ENCODE measurements at regions of chr1 and their contacts with region 1.

Region 1: GRCh38 chr1:38859561-38860453 is at the start of gene RRAGC:
- DNase-seq: peak; percentile 98
- ATAC-seq: peak; percentile 92
- H3K4me3 ChIP-seq: peak within 1 kb of the TSS; percentile 68 to 92 (median 85)
- H3K4me3 Mint-ChIP-seq: peak within 1 kb of the TSS; percentile 93
- H3K27ac ChIP-seq: peak within 1 kb of the TSS; percentile 82 to 91
- H3K27ac Mint-ChIP-seq: peak within 1 kb of the TSS; percentile 96
- H3K4me1 ChIP-seq: peaks cover 22 to 31% of the 10 kb centered on the region in 2 donors
- H3K4me1 Mint-ChIP-seq: peaks cover 53% of the 10 kb centered on the region
- H3K27me3 ChIP-seq: no peaks in the 10 kb centered on the region
- H3K27me3 Mint-ChIP-seq: no peaks in the 10 kb centered on the region
- CTCF ChIP-seq: no peak
- total RNA-seq, gene RRAGC: 37.6 and 39.3 TPM in 2 replicates

Region 2: GRCh38 chr1:37479255-37480124 is 1380.3 kb before region 1 on chr1:
- CTCF ChIA-PET with region 1: no interaction called
- POLR2A ChIA-PET with region 1: no interaction called
- intact Hi-C with region 1: loop called (anchors 5 kb)
- DNase-seq: peak; percentile 79
- ATAC-seq: peak; percentile 50
- H3K4me3 ChIP-seq: peak overlapping the region; percentile 94 to 99 (median 98)
- H3K4me3 Mint-ChIP-seq: peak overlapping the region; percentile 100
- H3K27ac ChIP-seq: peak overlapping the region; percentile 96 to 97
- H3K27ac Mint-ChIP-seq: peak overlapping the region; percentile 98
- H3K4me1 ChIP-seq: peaks cover 32 to 66% of the 10 kb centered on the region in 2 donors
- H3K4me1 Mint-ChIP-seq: peaks cover 60% of the 10 kb centered on the region
- H3K27me3 ChIP-seq: no peaks in the 10 kb centered on the region
- H3K27me3 Mint-ChIP-seq: no peaks in the 10 kb centered on the region
- CTCF ChIP-seq: no peak

Region 3: DNA sequence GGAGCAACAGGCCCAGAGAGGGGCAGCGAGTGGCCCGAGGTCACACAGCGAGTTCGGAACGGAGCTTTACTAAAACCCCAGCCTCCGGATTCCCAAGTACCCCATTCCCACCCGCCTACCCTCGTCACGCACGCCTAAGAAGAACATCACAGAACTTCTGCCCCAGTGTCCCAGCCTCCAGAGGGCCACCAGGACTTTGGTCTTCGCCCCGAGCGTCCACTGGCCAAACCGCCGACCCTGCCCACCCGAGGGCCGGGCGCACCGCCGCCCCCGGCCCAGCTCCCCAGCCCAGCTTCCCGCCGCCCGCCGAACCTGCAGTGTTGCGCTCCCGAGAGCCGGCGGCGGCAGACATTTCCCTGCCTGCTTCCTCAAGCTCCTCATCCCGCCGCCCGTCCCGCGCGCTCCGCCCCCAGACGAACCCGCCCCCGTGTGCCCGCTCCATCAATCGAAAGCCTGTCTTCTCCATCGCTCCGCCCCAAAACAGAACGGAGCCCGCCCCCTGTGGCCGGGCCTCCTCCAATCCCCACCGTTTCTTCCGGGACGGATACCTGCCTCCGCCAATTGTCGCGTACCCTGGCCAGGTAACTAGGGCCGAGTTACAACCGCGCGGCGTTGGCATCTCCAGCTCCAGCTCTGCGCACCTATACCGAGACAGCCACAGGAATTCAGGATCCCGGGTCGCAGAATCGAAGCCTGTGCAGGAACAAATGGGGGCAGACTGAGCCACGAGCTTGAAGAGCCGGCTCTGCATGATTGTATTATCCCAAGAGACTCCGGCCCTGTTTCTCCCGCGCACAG is 928.2 kb before region 1 on chr1:
- CTCF ChIA-PET with region 1: no interaction called
- POLR2A ChIA-PET with region 1: no interaction called
- intact Hi-C with region 1: loop called (anchors 2 kb)
- DNase-seq: peak; percentile 97
- ATAC-seq: peak; percentile 99
- H3K4me3 ChIP-seq: peak overlapping the region; percentile 69 to 98 (median 97)
- H3K4me3 Mint-ChIP-seq: peak overlapping the region; percentile 89
- H3K27ac ChIP-seq: peak overlapping the region in 1 of 2 donors; percentile 80
- H3K27ac Mint-ChIP-seq: peak overlapping the region; percentile 83
- H3K4me1 ChIP-seq: peaks cover 18 to 28% of the 10 kb centered on the region in 2 donors
- H3K4me1 Mint-ChIP-seq: peaks cover 42% of the 10 kb centered on the region
- H3K27me3 ChIP-seq: no peaks in the 10 kb centered on the region
- H3K27me3 Mint-ChIP-seq: no peaks in the 10 kb centered on the region
- CTCF ChIP-seq: no peak

Region 4: DNA sequence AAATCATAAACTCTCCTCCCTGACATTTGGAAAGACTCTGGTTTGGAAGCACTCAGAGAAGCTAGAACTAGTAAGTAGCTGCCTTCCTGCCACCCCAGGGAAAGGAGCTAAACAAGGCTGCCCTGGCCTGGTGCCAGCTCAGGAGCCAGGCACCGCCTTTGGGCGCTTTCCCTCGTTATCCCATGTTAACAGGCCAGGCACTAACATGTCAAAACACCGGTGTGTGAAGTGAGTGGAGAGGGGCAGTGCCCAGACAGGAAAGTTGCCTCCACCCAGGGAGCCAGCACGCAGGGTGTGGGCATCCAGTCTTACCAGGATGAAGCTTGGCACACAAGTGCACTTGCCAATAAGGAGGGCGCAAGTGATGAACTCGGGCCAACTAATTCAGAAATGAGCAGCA is 347.0 kb before region 1 on chr1:
- CTCF ChIA-PET with region 1: no interaction called
- POLR2A ChIA-PET with region 1: no interaction called
- intact Hi-C with region 1: no loop called
- DNase-seq: no peak
- ATAC-seq: no peak
- H3K4me3 ChIP-seq: no peak overlapping the region
- H3K4me3 Mint-ChIP-seq: no peak overlapping the region
- H3K27ac ChIP-seq: no peak overlapping the region
- H3K27ac Mint-ChIP-seq: no peak overlapping the region
- H3K4me1 ChIP-seq: no peaks in the 10 kb centered on the region
- H3K4me1 Mint-ChIP-seq: no peaks in the 10 kb centered on the region
- H3K27me3 ChIP-seq: peaks cover 0 to 25% (median 7%) of the 10 kb centered on the region in 4 experiments
- H3K27me3 Mint-ChIP-seq: peaks cover 34% of the 10 kb centered on the region
- CTCF ChIP-seq: no peak

Region 5: DNA sequence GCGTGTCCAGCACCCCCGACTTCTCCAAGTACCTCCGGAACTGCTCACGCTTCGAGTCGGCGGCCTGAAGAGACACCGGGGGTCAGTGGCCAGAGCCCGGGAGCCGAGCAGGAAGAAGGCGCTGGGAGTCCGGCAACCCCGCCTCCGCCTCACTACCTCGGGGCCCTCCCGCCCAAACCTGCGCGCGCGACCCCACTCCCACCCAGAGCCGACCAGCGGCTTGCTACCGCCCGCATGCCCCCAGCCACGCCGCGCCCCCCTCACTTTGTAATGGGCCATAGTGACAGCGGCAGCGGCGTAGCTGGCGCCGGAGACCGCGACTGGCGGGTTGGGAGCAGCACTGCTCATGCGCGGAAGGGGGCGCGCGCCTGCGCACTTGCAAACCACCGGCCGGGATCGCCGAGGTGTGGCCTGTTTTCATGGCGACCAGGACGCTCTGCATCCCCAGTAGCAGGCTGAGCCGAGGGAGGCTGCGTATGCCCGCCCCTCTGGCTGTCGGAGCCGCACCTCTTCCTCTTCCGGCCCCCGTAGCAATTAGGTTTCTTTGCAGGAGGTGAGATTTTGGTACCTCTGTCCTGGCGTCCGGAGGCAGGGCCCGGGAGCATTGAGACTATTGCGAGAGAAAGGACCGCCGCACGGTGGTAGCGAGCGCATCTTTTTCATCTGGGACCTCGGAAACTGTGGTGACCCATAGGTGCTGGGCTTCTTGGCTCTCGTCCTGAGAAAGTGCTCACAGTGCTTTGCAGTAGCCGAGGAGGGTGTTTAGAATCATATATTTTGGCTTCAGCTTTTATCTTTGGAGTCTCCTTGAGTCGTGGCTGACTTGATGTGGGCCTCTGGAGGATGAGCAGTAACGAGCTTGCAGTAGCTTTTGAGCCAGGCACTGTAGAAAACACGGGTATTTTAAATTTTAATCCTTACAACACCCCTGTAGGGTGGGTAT is 13.5 kb after region 1 on chr1 and contains the start of gene MYCBP:
- CTCF ChIA-PET with region 1: interaction called, 4 read pairs
- POLR2A ChIA-PET with region 1: interaction called, 16 read pairs
- intact Hi-C with region 1: loop called (anchors 1 kb)
- DNase-seq: peak; percentile 97
- ATAC-seq: peak; percentile 99
- H3K4me3 ChIP-seq: peak within 1 kb of the TSS; percentile 77 to 93 (median 85)
- H3K4me3 Mint-ChIP-seq: peak within 1 kb of the TSS; percentile 94
- H3K27ac ChIP-seq: peak within 1 kb of the TSS; percentile 39 to 82
- H3K27ac Mint-ChIP-seq: peak within 1 kb of the TSS; percentile 92
- H3K4me1 ChIP-seq: peaks cover 13 to 21% of the 10 kb centered on the region in 2 donors
- H3K4me1 Mint-ChIP-seq: peaks cover 26% of the 10 kb centered on the region
- H3K27me3 ChIP-seq: no peaks in the 10 kb centered on the region
- H3K27me3 Mint-ChIP-seq: no peaks in the 10 kb centered on the region
- CTCF ChIP-seq: no peak
- total RNA-seq, gene MYCBP: 7.8 and 8.9 TPM in 2 replicates

Region 6: GRCh38 chr1:39026051-39026865 is 166.5 kb after region 1 on chr1 and contains the start of gene NDUFS5:
- CTCF ChIA-PET with region 1: no interaction called
- POLR2A ChIA-PET with region 1: no interaction called
- intact Hi-C with region 1: loop called (anchors 1 kb)
- DNase-seq: peak; percentile 88
- ATAC-seq: peak; percentile 91
- H3K4me3 ChIP-seq: peak within 1 kb of the TSS; percentile 85 to 98 (median 98)
- H3K4me3 Mint-ChIP-seq: peak within 1 kb of the TSS; percentile 89
- H3K27ac ChIP-seq: peak within 1 kb of the TSS; percentile 88 to 92
- H3K27ac Mint-ChIP-seq: peak within 1 kb of the TSS; percentile 86
- H3K4me1 ChIP-seq: peaks cover 10 to 16% of the 10 kb centered on the region in 2 donors
- H3K4me1 Mint-ChIP-seq: peaks cover 20% of the 10 kb centered on the region
- H3K27me3 ChIP-seq: no peaks in the 10 kb centered on the region
- H3K27me3 Mint-ChIP-seq: no peaks in the 10 kb centered on the region
- CTCF ChIP-seq: no peak
- total RNA-seq, gene NDUFS5: 47.2 and 55.8 TPM in 2 replicates